K562 (cell line): ENCODE measurements at regions of chr1 and their contacts with region 1.

Region 1: GRCh38 chr1:113904674-113905434 is at the starts of genes AP4B1 and DCLRE1B:
- DNase-seq: peak; percentile 96 to 100 (median 97)
- ATAC-seq: peak; percentile 95
- H3K4me3 ChIP-seq: peak within 1 kb of the TSS; percentile 65
- H3K27ac ChIP-seq: peak within 1 kb of the TSS; percentile 93
- H3K4me1 ChIP-seq: peaks cover 10 to 19% of the 10 kb centered on the region in 2 experiments; a peak in 4 of 5 replicates
- H3K27me3 ChIP-seq: no peaks in the 10 kb centered on the region
- CTCF ChIP-seq: peak; percentile 89 to 96 (median 93)
- EP300 ChIP-seq: peak; percentile 80
- POLR2A ChIP-seq: peak; percentile 85
- RAD21 ChIP-seq: peak; percentile 95 to 98
- polyA plus RNA-seq, gene AP4B1: 21.9 to 28.2 TPM
- polyA plus RNA-seq, gene DCLRE1B: 12.4 to 22.2 TPM

Region 2: DNA sequence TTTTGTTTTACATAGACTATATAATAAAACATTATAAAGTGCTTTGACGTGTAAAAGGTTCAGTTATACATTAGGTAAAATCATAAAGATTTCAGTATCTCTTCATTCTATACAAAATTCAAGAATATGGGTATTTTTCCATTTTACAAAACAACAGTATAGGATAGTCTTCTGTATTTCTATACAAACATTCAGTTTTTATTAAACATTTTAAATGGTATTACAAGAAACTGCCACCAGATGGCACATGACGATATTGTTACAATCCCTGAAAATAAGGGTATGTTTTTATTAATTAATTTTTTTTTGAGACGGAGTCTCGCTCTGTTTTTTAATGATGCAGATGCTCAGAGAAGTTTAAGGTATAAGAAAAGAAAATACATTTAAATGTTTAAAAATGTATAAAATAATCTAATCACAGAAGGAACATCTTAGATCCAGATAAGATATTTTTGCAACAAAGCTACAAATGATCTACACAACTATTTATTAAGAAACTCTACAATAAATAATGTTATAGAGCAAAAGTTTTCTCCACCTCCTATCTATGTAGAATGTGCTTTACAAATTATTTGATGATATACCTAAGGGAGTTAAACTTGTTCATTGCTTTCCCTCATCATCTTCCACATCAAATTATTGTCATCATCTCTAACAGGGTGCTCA is 69.1 kb before region 1 on chr1:
- CTCF ChIA-PET with region 1: interaction called, 23 read pairs
- POLR2A ChIA-PET with region 1: interaction called, 5 read pairs
- in situ Hi-C with region 1: no loop called
- intact Hi-C with region 1: loop called (anchors 1 kb)
- DNase-seq: peak; percentile 33 to 71 (median 38)
- ATAC-seq: peak; percentile 70
- H3K4me3 ChIP-seq: no peak overlapping the region
- H3K27ac ChIP-seq: no peak overlapping the region
- H3K4me1 ChIP-seq: no peaks in the 10 kb centered on the region
- H3K27me3 ChIP-seq: no peaks in the 10 kb centered on the region
- CTCF ChIP-seq: peak in 2 of 3 experiments; percentile 52 to 83; a peak in 4 of 6 replicates
- EP300 ChIP-seq: no peak
- POLR2A ChIP-seq: no peak
- RAD21 ChIP-seq: peak; percentile 88 to 89

Region 3: GRCh38 chr1:113874012-113874879 is 30.6 kb before region 1 on chr1:
- CTCF ChIA-PET with region 1: no interaction called
- POLR2A ChIA-PET with region 1: interaction called, 3 read pairs
- in situ Hi-C with region 1: no loop called
- intact Hi-C with region 1: loop called (anchors 1 kb)
- DNase-seq: peak; percentile 31 to 70 (median 52)
- ATAC-seq: peak; percentile 88
- H3K4me3 ChIP-seq: no peak overlapping the region
- H3K27ac ChIP-seq: peak overlapping the region; percentile 15; the same call in 1 of the 3 replicates
- H3K4me1 ChIP-seq: peaks cover 0 to 32% of the 10 kb centered on the region in 2 experiments; a peak in 4 of 5 replicates
- H3K27me3 ChIP-seq: no peaks in the 10 kb centered on the region
- CTCF ChIP-seq: peak; percentile 61 to 69 (median 68)
- EP300 ChIP-seq: peak; percentile 34; the same call in 1 of the 2 replicates
- POLR2A ChIP-seq: no peak
- RAD21 ChIP-seq: peak; percentile 37 to 38; a peak in 1 of 4 replicates

Region 4: GRCh38 chr1:113886417-113887401 is 18.1 kb before region 1 on chr1:
- CTCF ChIA-PET with region 1: no interaction called
- POLR2A ChIA-PET with region 1: interaction called, 11 read pairs
- in situ Hi-C with region 1: no loop called
- intact Hi-C with region 1: no loop called
- DNase-seq: no peak
- ATAC-seq: peak; percentile 36; the same call in 2 of the 3 replicates
- H3K4me3 ChIP-seq: no peak overlapping the region
- H3K27ac ChIP-seq: no peak overlapping the region
- H3K4me1 ChIP-seq: peaks cover 0 to 9% of the 10 kb centered on the region in 2 experiments; a peak in 3 of 5 replicates
- H3K27me3 ChIP-seq: no peaks in the 10 kb centered on the region
- CTCF ChIP-seq: no peak
- EP300 ChIP-seq: no peak
- POLR2A ChIP-seq: no peak
- RAD21 ChIP-seq: no peak

Region 5: DNA sequence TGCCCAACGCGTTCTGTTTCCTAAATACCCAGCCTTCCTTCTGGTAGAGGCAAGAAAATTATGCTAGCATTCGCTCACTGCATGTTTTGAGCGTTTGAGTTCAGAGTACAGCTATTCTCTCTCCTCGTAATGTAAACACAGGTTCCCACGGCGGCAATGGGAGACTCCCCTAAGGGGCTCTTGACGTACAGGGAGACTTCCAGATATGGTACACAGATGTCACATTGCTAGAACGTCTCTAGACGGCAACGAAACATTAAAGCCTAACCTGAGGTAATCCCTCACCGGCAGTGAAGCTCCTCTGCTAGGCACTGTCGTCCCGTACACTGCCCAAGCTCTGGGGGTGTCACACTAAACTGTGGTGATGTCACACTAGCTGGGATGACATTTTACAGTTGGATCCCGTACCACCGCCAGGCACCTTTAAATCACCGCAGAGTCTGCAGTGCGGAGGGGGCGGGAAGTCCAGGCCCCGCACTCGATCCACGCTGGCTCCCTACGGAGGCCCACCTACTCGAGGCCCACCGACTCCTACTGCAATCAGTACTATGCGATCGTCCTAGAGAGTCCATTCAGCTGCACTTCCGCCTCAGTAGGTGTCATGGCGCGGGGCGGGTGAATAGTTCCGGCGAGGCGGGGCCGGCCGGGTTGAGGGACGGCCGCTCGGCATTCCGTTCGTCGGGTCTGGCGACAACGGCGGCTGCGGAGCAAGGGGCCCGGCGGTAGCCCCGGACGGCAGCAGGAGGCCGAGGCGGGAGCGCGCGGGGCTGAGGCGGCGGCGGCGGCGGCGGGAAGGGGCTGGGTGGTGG is 24.3 kb after region 1 on chr1 and contains the start of gene HIPK1:
- CTCF ChIA-PET with region 1: no interaction called
- POLR2A ChIA-PET with region 1: interaction called, 64 read pairs
- in situ Hi-C with region 1: no loop called
- intact Hi-C with region 1: loop called (anchors 1 kb)
- DNase-seq: peak; percentile 92 to 97 (median 93)
- ATAC-seq: peak; percentile 76
- H3K4me3 ChIP-seq: peak within 1 kb of the TSS; percentile 70
- H3K27ac ChIP-seq: peak within 1 kb of the TSS; percentile 96
- H3K4me1 ChIP-seq: peaks cover 15 to 34% of the 10 kb centered on the region in 2 experiments
- H3K27me3 ChIP-seq: no peaks in the 10 kb centered on the region
- CTCF ChIP-seq: no peak
- EP300 ChIP-seq: no peak; the same call in 1 of the 2 replicates
- POLR2A ChIP-seq: peak; percentile 85
- RAD21 ChIP-seq: peak; percentile 3 to 10; a peak in 1 of 4 replicates
- polyA plus RNA-seq, gene HIPK1: 10.0 to 10.9 TPM

Region 6: GRCh38 chr1:114274621-114275317 is 369.9 kb after region 1 on chr1:
- CTCF ChIA-PET with region 1: no interaction called
- POLR2A ChIA-PET with region 1: no interaction called
- in situ Hi-C with region 1: no loop called
- intact Hi-C with region 1: no loop called
- DNase-seq: no peak
- ATAC-seq: no peak
- H3K4me3 ChIP-seq: no peak overlapping the region
- H3K27ac ChIP-seq: no peak overlapping the region
- H3K4me1 ChIP-seq: no peaks in the 10 kb centered on the region
- H3K27me3 ChIP-seq: peaks cover 4 to 19% of the 10 kb centered on the region in 2 experiments; a peak in 3 of 5 replicates
- CTCF ChIP-seq: no peak
- EP300 ChIP-seq: no peak
- POLR2A ChIP-seq: no peak
- RAD21 ChIP-seq: no peak